ENCODE measurements at regions of chr11 and their contacts with region 1.

Region 1: DNA sequence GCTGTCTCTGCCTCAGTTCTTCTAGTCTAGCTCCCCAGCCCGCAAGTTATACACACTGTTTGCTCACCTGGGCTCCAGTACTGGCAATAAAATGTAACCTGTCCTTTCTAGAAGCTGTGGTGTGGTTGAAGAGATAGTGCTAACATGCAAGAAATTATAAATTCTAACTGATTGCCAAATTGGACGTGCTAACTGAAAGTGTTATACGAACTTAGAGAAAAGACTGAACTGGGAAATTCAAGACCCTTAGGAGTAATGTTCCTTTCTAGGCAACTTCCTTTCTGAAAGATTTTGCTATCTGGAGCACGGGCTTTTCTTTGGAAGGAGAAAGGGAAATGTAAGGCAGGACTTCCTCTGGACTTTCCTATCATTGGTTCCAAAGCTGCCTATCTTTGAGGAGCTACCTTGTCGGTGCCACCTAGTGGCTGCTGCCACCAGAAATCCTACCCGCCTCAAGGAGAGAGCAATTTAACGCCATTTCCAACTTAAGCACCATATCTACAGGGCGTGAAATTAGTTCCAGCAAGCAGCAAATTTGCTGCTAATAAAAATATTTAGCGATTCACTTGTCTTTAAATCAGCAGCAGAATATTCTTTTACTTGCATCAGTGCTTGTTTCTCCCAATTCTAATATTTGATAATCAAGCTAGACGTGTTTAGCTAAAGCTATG is 12.7 kb upstream of the TMEM218 start:
- DNase-seq: peak; percentile 42
- CTCF ChIP-seq: peak; percentile 34

Region 2: DNA sequence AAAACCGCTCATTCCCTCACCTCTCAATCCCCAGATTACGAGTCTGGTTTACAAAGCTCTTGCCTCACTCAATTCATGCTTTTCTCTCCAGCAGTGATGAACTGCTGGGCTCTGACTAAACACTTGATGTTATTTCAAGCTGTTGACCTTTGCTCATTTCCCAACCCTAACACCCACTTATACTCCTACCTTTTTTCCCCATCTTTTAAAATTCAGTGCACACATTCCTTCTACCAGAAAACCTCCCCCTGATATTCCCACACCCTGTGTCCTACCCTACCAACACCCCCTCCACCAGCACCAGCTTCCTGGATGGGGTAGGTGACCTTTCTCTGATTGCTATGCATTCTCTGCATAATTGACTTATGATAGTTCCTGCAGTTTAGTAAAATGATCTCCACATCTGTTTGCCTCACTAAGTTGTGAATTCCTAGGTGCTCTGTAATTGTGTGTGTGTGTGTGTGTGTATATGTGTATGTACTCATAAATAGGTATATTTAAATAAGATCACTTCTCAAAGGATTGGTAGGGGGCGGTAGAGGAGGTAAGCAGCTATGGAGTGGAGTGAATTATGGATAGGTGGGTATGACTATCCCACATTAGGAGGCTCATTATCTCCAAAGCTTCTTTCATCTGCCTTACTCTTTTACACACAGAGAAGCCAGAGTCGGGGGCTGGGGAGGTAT is 189.1 kb before region 1 on chr11:
- CTCF ChIA-PET with region 1: no interaction called
- POLR2A ChIA-PET with region 1: no interaction called
- DNase-seq: no peak
- CTCF ChIP-seq: no peak

Region 3: DNA sequence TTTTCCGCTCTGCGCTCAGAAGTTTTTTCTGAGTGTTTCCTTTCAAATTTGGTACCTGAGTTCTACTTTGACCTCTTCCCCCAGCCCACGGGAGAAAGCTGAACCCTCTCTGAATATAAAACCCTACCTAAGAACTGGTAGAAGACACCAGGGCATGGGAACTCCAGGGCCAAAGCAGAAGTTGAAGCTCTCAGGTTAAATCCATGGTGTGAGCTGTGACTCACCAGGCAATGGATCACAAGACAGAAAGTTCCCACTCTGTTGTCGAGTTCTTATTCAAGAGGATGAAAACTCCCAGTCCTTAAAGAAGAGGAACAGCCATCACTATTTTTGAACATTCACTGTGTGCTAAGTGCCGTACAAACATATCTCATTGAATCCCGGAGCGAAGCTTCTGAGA is 21.6 kb before region 1 on chr11:
- CTCF ChIA-PET with region 1: interaction called, 14 read pairs
- POLR2A ChIA-PET with region 1: no interaction called
- DNase-seq: peak; percentile 20
- CTCF ChIP-seq: no peak

Region 4: DNA sequence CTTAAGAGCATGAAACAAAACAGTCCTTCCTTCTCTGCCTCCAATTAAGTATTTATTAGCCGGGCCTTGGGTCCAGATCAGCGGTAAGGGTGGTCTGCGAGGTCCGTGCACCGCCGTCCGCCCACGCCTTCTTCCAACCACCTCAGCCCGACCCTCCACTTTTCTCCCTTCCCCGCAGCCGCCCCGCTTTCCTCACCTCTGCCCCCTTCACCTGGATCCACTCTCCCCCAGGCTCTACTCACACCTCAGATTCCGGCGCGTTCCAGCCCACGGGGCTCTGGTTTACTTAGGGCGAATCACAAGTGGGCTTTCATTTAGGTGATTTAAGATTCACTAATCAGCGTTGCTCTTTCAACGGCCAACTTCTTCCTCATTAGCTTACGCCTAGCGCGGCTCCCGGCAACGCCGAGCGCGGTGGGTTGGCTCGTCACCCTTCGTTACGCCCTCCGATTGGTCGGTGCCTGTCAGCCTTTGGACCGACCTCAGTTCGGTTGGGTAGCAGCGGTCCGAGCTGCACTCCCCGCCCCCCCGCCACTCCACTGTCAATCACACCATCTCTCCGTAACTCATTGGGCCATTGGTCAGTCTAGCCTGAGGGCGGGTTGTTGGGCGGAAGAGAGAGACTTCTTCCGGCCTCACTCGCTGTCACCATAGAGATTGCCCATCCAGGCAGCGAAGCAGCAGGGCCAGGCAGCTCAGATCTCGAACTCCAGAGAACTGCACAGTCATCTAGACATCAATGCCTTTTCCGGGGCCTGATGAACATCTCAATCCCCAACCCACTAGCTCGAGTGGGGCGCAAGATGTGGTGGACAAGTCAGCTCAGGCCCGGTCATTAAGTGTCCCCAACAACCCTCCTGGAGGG is 12.5 kb before region 1 on chr11 and contains the start of gene TMEM218:
- CTCF ChIA-PET with region 1: interaction called, 43 read pairs
- POLR2A ChIA-PET with region 1: no interaction called
- DNase-seq: peak; percentile 95
- CTCF ChIP-seq: no peak

Measured in GM10248 (cell line).